ENCODE measurements at regions of chr4 and their contacts with region 1.

Region 1: DNA sequence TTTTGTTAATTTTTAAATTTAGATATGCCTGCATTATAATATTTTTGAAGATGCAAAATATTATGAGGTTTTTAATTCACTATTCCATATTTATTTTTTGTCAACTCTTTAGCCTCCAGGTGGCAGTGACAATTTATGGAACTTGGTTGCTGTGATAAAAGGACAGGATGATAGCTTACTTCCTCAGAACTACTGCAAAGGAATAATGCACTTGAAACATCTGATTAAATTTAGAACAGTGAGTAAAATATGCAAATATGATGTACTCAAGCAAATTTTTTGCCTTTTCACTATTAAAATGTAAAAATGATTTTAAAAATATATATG is 45.1 kb downstream of the SPATA4 start:
- DNase-seq: no peak
- H3K4me3 ChIP-seq: no peak overlapping the region
- H3K27ac ChIP-seq: peak overlapping the region in 2 of 4 donors; percentile 34 to 60
- H3K4me1 ChIP-seq: peaks cover 0 to 27% (median 8%) of the 10 kb centered on the region in 4 donors
- H3K27me3 ChIP-seq: no peaks in the 10 kb centered on the region
- CTCF ChIP-seq: peak in 2 of 4 experiments; percentile 14 to 47
- EP300 ChIP-seq: no peak
- POLR2A ChIP-seq: no peak

Region 2: DNA sequence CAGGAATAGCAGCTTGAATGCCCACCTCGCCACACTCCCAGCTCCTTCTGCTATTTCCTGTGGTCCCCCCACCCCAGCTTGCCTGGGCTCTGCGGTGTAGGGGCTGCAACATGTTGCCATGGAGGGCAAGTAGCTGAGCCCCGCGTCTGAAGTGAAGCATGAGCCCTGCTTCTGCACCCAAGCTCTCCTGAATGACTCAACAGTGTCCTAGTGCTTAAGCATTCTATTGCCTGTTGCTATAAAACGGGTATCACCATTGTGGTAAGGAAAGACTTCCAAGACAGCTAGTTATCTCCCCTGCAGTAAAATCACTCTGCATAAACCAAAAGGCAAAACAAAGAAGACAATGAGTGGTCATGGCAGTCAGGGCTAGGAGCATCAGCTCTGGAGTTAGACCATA is 76.4 kb after region 1 on chr4:
- intact Hi-C with region 1: loop called (anchors 5 kb)
- DNase-seq: no peak
- H3K4me3 ChIP-seq: no peak overlapping the region
- H3K27ac ChIP-seq: peak overlapping the region in 2 of 4 donors; percentile 22 to 88
- H3K4me1 ChIP-seq: peaks cover 0 to 38% (median 29%) of the 10 kb centered on the region in 4 donors
- H3K27me3 ChIP-seq: no peaks in the 10 kb centered on the region
- CTCF ChIP-seq: no peak
- EP300 ChIP-seq: no peak
- POLR2A ChIP-seq: no peak

Region 3: GRCh38 chr4:176277162-176277904 is 127.0 kb after region 1 on chr4:
- intact Hi-C with region 1: loop called (anchors 2 kb)
- DNase-seq: peak; percentile 86
- H3K4me3 ChIP-seq: peak overlapping the region; percentile 1 to 28 (median 24)
- H3K27ac ChIP-seq: peak overlapping the region; percentile 8 to 74 (median 70)
- H3K4me1 ChIP-seq: peaks cover 0 to 24% (median 18%) of the 10 kb centered on the region in 4 donors
- H3K27me3 ChIP-seq: no peaks in the 10 kb centered on the region
- CTCF ChIP-seq: peak in 3 of 4 experiments; percentile 25 to 46 (median 30)
- EP300 ChIP-seq: no peak
- POLR2A ChIP-seq: no peak

Region 4: DNA sequence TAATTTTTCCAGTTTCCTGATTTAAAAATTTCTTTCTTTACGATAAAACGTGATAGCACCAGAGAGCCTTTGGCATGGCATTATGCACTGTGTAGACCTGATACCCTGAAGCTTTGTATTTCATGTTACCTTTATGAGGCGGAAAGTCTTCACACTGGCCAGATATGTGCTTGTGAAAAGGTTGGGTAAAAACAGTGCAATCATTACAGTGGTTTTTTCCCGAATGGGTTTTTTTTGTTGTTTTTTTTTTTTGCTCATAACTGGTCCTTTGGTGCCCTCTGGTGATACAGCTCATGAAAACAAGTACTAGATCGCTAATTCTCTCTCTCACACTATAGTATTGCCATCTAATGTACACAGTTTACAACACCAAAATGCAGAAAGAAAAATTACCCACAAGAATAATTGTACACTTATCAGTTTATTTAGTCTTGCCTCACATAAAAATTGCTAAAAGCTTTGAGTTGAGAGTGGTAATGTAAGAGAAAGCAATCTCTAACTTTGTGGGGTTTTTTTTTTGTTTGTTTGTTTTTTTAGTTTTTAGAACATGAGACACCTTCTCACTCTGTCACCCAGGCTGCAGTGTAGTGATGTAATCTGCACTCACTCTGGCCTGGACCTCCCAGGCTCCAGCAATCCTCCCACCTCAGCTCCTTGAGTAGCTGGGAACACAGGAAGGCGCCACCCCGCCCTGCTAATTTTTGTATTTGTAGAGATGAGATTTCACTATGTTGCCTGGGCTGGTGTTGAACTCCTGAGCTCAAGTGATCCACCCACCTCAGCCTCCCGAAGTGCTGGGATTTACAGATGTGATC is 190.8 kb after region 1 on chr4:
- intact Hi-C with region 1: loop called (anchors 1 kb)
- DNase-seq: no peak
- H3K4me3 ChIP-seq: peak overlapping the region in 2 of 4 donors; percentile 14 to 20
- H3K27ac ChIP-seq: no peak overlapping the region
- H3K4me1 ChIP-seq: peaks cover 0 to 33% (median 11%) of the 10 kb centered on the region in 4 donors
- H3K27me3 ChIP-seq: no peaks in the 10 kb centered on the region
- CTCF ChIP-seq: peak in 3 of 4 experiments; percentile 22 to 54 (median 42)
- EP300 ChIP-seq: no peak
- POLR2A ChIP-seq: no peak

Region 5: DNA sequence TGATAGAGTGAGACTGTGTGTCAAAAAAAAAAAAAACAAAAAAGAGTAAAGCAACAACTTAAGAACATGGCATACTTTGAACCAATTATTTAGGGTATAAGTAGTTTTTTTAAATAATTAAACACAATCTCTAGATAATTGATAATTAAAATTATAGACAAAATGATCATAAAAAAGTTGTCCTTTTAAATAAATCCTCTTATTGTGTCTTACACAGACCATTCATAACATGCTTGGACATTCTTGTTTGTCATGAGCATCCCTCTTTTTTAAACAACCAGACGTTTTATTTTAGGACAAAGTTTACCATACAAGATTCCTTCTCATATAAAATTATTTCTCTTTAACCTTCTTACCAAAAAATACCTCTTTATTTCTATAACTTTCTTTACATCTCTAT is 204.6 kb after region 1 on chr4:
- intact Hi-C with region 1: no loop called
- DNase-seq: no peak
- H3K4me3 ChIP-seq: no peak overlapping the region
- H3K27ac ChIP-seq: no peak overlapping the region
- H3K4me1 ChIP-seq: no peaks in the 10 kb centered on the region
- H3K27me3 ChIP-seq: no peaks in the 10 kb centered on the region
- CTCF ChIP-seq: no peak
- EP300 ChIP-seq: no peak
- POLR2A ChIP-seq: no peak

Measured in sigmoid colon (tissue), 7 donors.